SK-N-SH (cell line): ENCODE measurements at regions of chr19 and their contacts with region 1.

Region 1: GRCh38 chr19:46542428-46543230 is 47.0 kb upstream of the PNMA8B start:
- DNase-seq: peak; percentile 77
- H3K4me3 ChIP-seq: peak overlapping the region in 1 of 2 experiments; percentile 45; a peak in 1 of 4 replicates
- H3K27ac ChIP-seq: no peak overlapping the region
- H3K4me1 ChIP-seq: no peaks in the 10 kb centered on the region; a peak in 1 of 4 replicates
- H3K27me3 ChIP-seq: no peaks in the 10 kb centered on the region
- CTCF ChIP-seq: peak; percentile 94
- EP300 ChIP-seq: no peak
- RAD21 ChIP-seq: peak; percentile 87

Region 2: GRCh38 chr19:46520616-46521015 is 22.0 kb before region 1 on chr19:
- CTCF ChIA-PET with region 1: interaction called, 59 read pairs
- POLR2A ChIA-PET with region 1: no interaction called
- DNase-seq: no peak
- H3K4me3 ChIP-seq: no peak overlapping the region
- H3K27ac ChIP-seq: no peak overlapping the region
- H3K4me1 ChIP-seq: no peaks in the 10 kb centered on the region
- H3K27me3 ChIP-seq: no peaks in the 10 kb centered on the region; the same call in 1 of the 2 replicates
- CTCF ChIP-seq: no peak
- EP300 ChIP-seq: no peak
- RAD21 ChIP-seq: no peak